Activated B cell treated with CpG ODN at 0.5 μM for 24 hours (primary cell): ENCODE measurements at regions of chr20 and their contacts with region 1.

Region 1: GRCh38 chr20:40990542-40991120 is 38.0 kb upstream of the TOP1 start:
- DNase-seq: peak; percentile 38
- ATAC-seq: peak; percentile 35
- H3K4me3 Mint-ChIP-seq: peak overlapping the region; percentile 72
- H3K27ac Mint-ChIP-seq: peak overlapping the region; percentile 96
- H3K4me1 Mint-ChIP-seq: peaks cover 52% of the 10 kb centered on the region
- H3K27me3 Mint-ChIP-seq: no peaks in the 10 kb centered on the region
- CTCF ChIP-seq: no peak

Region 2: DNA sequence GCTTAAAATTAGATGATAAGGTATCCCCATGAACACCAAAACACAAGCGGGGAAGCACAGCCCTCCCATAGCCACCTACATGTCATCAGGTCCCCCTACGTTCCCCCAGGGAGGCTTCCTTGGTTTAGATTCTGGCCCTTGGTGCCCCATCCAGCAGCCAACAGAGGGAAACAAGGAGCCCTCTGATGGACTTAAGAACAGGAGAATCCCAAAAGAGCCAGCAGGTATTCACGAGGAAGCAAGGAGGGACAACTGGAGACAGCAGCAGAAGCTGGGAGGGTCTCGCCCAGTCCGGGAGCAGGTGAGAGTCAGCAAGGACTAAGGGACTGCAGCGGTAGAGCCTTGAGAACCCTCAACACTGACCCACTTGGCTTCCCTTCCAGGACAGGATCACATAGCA is 20.4 kb before region 1 on chr20:
- CTCF ChIA-PET with region 1: interaction called, 35 read pairs
- POLR2A ChIA-PET with region 1: interaction called, 5 read pairs
- intact Hi-C with region 1: loop called (anchors 1 kb)
- DNase-seq: no peak
- ATAC-seq: no peak
- H3K4me3 Mint-ChIP-seq: no peak overlapping the region
- H3K27ac Mint-ChIP-seq: no peak overlapping the region
- H3K4me1 Mint-ChIP-seq: peaks cover 14% of the 10 kb centered on the region
- H3K27me3 Mint-ChIP-seq: peaks cover 2% of the 10 kb centered on the region
- CTCF ChIP-seq: no peak

Region 3: GRCh38 chr20:41028348-41029148 is 37.9 kb after region 1 on chr20 and contains the start of gene TOP1:
- CTCF ChIA-PET with region 1: interaction called, 19 read pairs
- POLR2A ChIA-PET with region 1: interaction called, 59 read pairs
- intact Hi-C with region 1: loop called (anchors 1 kb)
- DNase-seq: peak; percentile 98
- ATAC-seq: peak; percentile 98
- H3K4me3 Mint-ChIP-seq: peak within 1 kb of the TSS; percentile 93
- H3K27ac Mint-ChIP-seq: peak within 1 kb of the TSS; percentile 90
- H3K4me1 Mint-ChIP-seq: peaks cover 57% of the 10 kb centered on the region
- H3K27me3 Mint-ChIP-seq: no peaks in the 10 kb centered on the region
- CTCF ChIP-seq: no peak
- total RNA-seq, gene TOP1: 62.7 and 63.3 TPM in 2 replicates

Region 4: GRCh38 chr20:41064377-41064776 is 73.7 kb after region 1 on chr20:
- CTCF ChIA-PET with region 1: interaction called, 71 read pairs
- POLR2A ChIA-PET with region 1: interaction called, 12 read pairs
- intact Hi-C with region 1: loop called (anchors 1 kb)
- DNase-seq: no peak
- ATAC-seq: peak; percentile 62
- H3K4me3 Mint-ChIP-seq: peak overlapping the region; percentile 33
- H3K27ac Mint-ChIP-seq: no peak overlapping the region
- H3K4me1 Mint-ChIP-seq: peaks cover 52% of the 10 kb centered on the region
- H3K27me3 Mint-ChIP-seq: no peaks in the 10 kb centered on the region
- CTCF ChIP-seq: no peak

Region 5: DNA sequence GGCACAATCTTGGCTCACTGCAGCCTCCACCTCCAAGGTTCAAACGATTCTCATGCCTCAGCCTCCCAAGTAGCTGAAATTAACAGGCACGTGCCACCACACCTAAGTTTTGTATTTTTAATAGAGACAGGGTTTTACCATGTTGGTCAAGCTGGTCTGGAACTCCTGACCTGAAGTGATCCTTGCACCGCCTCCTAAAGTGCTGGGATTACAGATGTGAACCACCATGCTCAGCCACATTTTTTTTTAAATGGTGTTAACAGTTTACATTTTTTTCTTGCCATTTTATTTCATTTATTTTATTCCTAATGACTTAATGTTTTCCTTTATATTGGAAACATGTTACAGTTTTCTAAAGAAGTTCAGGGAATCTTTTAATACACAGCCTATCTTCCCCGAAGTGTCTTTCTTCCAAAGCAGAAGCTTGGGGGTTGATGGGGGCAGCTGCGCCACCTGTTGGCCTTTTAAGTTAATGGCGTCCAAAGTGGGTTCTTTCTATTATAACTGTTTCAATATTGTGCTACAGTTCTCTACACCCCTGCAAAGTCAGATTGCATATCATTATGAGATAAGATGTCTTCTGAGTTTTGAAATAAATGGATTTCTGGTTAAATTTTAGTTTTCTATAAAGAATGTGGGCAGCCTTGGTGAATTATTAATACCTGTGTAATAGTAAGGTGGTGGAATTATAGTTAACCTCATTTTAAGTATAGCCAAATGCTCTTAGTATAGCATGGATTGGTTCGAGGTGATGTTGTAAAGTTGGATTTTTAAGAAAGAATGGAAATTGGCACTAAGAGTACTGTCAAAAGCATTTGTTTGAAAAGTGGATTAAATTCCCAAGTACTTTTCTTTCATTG is 104.7 kb after region 1 on chr20:
- CTCF ChIA-PET with region 1: interaction called, 105 read pairs
- POLR2A ChIA-PET with region 1: interaction called, 11 read pairs
- intact Hi-C with region 1: loop called (anchors 1 kb)
- DNase-seq: peak; percentile 26
- ATAC-seq: peak; percentile 69
- H3K4me3 Mint-ChIP-seq: no peak overlapping the region
- H3K27ac Mint-ChIP-seq: no peak overlapping the region
- H3K4me1 Mint-ChIP-seq: no peaks in the 10 kb centered on the region
- H3K27me3 Mint-ChIP-seq: no peaks in the 10 kb centered on the region
- CTCF ChIP-seq: peak; percentile 84